Endothelial cell of umbilical vein (primary cell): ENCODE measurements at regions of chr17 and their contacts with region 1.

Region 1: DNA sequence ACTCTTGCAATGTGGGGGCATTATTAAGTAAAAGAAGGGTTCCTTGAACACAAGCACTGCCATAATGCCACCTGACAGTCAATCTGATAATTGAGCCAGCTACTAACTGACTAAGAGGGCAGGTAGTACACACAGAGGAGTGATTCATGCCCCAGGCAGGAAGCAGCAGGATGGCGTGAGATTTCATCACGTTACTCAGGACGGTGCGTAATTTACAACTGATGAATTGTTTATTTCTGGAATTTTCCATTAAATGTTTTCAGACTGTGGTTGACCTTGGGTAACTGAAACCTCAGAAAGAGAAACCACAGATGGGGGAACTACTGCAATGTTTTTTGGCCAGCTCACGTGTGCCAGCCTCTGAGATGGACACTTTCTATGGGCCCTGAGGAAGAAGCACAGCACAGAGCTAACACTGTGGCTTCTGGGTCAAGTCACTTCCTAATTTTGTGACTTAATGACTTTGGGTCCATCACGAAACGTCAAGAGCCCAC is 46.7 kb downstream of the C17orf67 start:
- DNase-seq: peak; percentile 83
- H3K4me3 ChIP-seq: no peak overlapping the region
- H3K27ac ChIP-seq: peak overlapping the region; percentile 63
- H3K4me1 ChIP-seq: peaks cover 13% of the 10 kb centered on the region
- H3K27me3 ChIP-seq: no peaks in the 10 kb centered on the region
- CTCF ChIP-seq: no peak
- POLR2A ChIP-seq: no peak

Region 2: GRCh38 chr17:56661916-56662315 is 125.1 kb before region 1 on chr17:
- CTCF ChIA-PET with region 1: no interaction called
- POLR2A ChIA-PET with region 1: no interaction called
- dilution Hi-C with region 1: no loop called
- intact Hi-C with region 1: no loop called
- DNase-seq: no peak
- H3K4me3 ChIP-seq: no peak overlapping the region
- H3K27ac ChIP-seq: no peak overlapping the region
- H3K4me1 ChIP-seq: no peaks in the 10 kb centered on the region
- H3K27me3 ChIP-seq: no peaks in the 10 kb centered on the region
- CTCF ChIP-seq: no peak
- POLR2A ChIP-seq: no peak

Region 3: GRCh38 chr17:56679115-56679766 is 107.8 kb before region 1 on chr17:
- CTCF ChIA-PET with region 1: no interaction called
- POLR2A ChIA-PET with region 1: no interaction called
- dilution Hi-C with region 1: no loop called
- intact Hi-C with region 1: loop called (anchors 1 kb)
- DNase-seq: peak; percentile 54
- H3K4me3 ChIP-seq: peak overlapping the region; percentile 19 to 58 (median 21)
- H3K27ac ChIP-seq: no peak overlapping the region
- H3K4me1 ChIP-seq: peaks cover 32% of the 10 kb centered on the region
- H3K27me3 ChIP-seq: peaks cover 27 to 38% of the 10 kb centered on the region in 2 experiments
- CTCF ChIP-seq: peak; percentile 60 to 61
- POLR2A ChIP-seq: no peak

Region 4: DNA sequence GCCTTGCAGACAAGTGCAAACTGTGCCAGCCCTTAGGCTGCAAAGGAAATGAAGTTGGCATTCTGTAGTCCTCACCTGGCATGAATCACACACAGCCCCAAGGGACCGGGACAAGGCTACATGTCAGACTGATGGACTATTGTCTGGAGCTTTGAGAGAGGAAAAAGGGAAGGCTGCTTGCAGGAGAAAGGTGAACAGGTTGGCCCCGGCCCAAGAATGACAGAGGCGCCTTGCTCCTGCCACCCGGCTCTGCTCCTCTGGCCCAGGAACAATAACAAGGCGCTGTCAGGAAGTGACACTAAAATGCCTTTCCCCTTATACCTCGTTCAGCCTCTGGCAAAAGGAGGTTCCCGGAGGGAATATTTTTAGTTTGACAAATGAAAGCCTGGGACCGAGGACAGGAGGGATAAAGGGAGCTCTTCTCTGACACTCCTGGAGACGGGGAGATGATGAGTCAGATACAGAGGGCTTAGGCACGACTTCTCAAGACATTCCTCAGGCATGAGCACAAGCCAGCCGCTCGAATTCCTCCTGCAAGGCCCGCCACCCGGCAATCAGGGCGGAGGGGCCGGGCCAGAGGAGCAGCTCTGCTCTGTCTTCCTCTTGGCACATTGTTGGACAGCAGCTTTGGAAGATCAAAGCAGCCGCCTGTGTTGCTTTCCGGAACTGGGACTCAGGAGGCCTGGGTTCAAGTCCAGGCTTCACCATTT is 87.7 kb before region 1 on chr17:
- CTCF ChIA-PET with region 1: interaction called, 3 read pairs
- POLR2A ChIA-PET with region 1: no interaction called
- dilution Hi-C with region 1: no loop called
- intact Hi-C with region 1: loop called (anchors 1 kb)
- DNase-seq: peak; percentile 56
- H3K4me3 ChIP-seq: no peak overlapping the region
- H3K27ac ChIP-seq: peak overlapping the region; percentile 88
- H3K4me1 ChIP-seq: peaks cover 18% of the 10 kb centered on the region
- H3K27me3 ChIP-seq: no peaks in the 10 kb centered on the region
- CTCF ChIP-seq: no peak
- POLR2A ChIP-seq: peak; percentile 42